GM12878 (cell line): ENCODE measurements at regions of chr2 and their contacts with region 1.

Region 1: DNA sequence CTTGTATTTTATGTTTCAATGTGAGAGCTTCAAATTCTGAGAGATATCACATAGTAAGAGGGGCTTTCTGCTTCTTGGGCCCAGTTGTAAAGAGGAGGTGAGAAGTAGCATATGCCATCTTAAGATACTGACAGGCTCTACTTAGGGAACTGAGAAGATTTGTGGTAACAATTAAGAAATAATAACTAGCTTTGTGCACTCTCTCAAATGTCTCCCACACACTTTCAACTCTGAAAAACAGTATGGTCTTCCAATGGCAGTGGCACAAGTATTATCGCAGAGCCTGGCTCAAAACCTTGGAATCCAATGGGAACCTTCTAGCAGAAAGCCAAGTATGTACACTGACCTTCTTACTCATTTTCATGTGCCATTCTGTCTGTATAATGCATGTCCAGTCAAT is 80.3 kb upstream of the FAM237A start:
- DNase-seq: no peak
- ATAC-seq: peak; percentile 91
- H3K4me3 ChIP-seq: no peak overlapping the region
- H3K27ac ChIP-seq: no peak overlapping the region
- H3K4me1 ChIP-seq: no peaks in the 10 kb centered on the region
- H3K27me3 ChIP-seq: no peaks in the 10 kb centered on the region
- CTCF ChIP-seq: no peak
- EP300 ChIP-seq: peak in 1 of 2 experiments; percentile 78; a peak in 3 of 4 replicates
- POLR2A ChIP-seq: no peak
- RAD21 ChIP-seq: no peak

Region 2: GRCh38 chr2:206572725-206573124 is 10.8 kb after region 1 on chr2:
- CTCF ChIA-PET with region 1: interaction called, 16 read pairs
- POLR2A ChIA-PET with region 1: interaction called, 4 read pairs
- RAD21 ChIA-PET with region 1: interaction called, 11 read pairs
- SMC1A ChIA-PET with region 1: interaction called, 20 read pairs
- in situ Hi-C with region 1: no loop called
- intact Hi-C with region 1: no loop called
- DNase-seq: no peak
- ATAC-seq: peak; percentile 77
- H3K4me3 ChIP-seq: no peak overlapping the region
- H3K27ac ChIP-seq: no peak overlapping the region
- H3K4me1 ChIP-seq: no peaks in the 10 kb centered on the region
- H3K27me3 ChIP-seq: no peaks in the 10 kb centered on the region
- CTCF ChIP-seq: no peak
- EP300 ChIP-seq: 0 out of 4 replicates have a peak, but pooled peaks of 1 of the 2 experiments have one; percentile 13
- POLR2A ChIP-seq: no peak
- RAD21 ChIP-seq: no peak